ENCODE measurements at regions of chr13 and their contacts with region 1.

Region 1: GRCh38 chr13:25018729-25019115 is 77.2 kb upstream of the PABPC3 start:
- DNase-seq: peak in 1 of 2 experiments; percentile 46
- ATAC-seq: peak; percentile 67 to 74; a peak in 5 of 6 replicates
- H3K4me3 ChIP-seq: peak overlapping the region; percentile 52
- H3K27ac ChIP-seq: peak overlapping the region; percentile 74 to 88
- H3K4me1 ChIP-seq: no peaks in the 10 kb centered on the region
- CTCF ChIP-seq: no peak
- EP300 ChIP-seq: no peak
- POLR2A ChIP-seq: no peak
- RAD21 ChIP-seq: no peak

Region 2: GRCh38 chr13:25001476-25002206 is 17.1 kb before region 1 on chr13:
- CTCF ChIA-PET with region 1: interaction called, 10 read pairs
- POLR2A ChIA-PET with region 1: no interaction called
- DNase-seq: peak in 1 of 2 experiments; percentile 26
- ATAC-seq: peak; percentile 28 to 33; a peak in 2 of 6 replicates
- H3K4me3 ChIP-seq: no peak overlapping the region
- H3K27ac ChIP-seq: peak overlapping the region; percentile 51 to 65; a peak in 3 of 6 replicates
- H3K4me1 ChIP-seq: peaks cover 14% of the 10 kb centered on the region
- CTCF ChIP-seq: no peak
- EP300 ChIP-seq: no peak
- POLR2A ChIP-seq: no peak
- RAD21 ChIP-seq: no peak

Region 3: DNA sequence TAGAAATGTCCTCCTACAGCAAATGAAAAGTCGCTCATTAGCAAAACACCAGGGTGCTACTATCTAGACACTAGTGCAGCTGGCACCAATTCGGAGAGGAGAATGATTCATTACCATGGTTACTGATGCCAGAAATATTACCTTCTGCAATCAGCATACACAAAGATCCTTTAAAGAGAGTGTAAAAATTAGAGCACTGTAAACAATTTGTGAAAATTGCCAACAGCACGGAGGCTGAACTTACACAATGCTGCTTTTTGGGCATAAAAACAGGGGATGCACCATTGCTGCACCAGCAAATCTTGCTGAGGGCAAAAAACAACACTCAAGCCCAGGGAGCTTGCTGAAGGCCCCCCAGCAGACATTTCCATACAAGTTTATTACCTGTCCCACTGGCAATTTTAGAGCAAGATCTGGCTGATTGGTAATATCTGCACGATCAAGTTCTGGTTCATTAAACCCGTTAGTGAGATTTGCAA is 119.0 kb after region 1 on chr13:
- CTCF ChIA-PET with region 1: no interaction called
- POLR2A ChIA-PET with region 1: no interaction called
- DNase-seq: no peak
- ATAC-seq: no peak
- H3K4me3 ChIP-seq: no peak overlapping the region
- H3K27ac ChIP-seq: no peak overlapping the region
- H3K4me1 ChIP-seq: no peaks in the 10 kb centered on the region
- CTCF ChIP-seq: no peak
- EP300 ChIP-seq: no peak
- POLR2A ChIP-seq: no peak
- RAD21 ChIP-seq: no peak

Measured in A549 (cell line).